ENCODE measurements at regions of chr5 and their contacts with region 1.

Region 1: DNA sequence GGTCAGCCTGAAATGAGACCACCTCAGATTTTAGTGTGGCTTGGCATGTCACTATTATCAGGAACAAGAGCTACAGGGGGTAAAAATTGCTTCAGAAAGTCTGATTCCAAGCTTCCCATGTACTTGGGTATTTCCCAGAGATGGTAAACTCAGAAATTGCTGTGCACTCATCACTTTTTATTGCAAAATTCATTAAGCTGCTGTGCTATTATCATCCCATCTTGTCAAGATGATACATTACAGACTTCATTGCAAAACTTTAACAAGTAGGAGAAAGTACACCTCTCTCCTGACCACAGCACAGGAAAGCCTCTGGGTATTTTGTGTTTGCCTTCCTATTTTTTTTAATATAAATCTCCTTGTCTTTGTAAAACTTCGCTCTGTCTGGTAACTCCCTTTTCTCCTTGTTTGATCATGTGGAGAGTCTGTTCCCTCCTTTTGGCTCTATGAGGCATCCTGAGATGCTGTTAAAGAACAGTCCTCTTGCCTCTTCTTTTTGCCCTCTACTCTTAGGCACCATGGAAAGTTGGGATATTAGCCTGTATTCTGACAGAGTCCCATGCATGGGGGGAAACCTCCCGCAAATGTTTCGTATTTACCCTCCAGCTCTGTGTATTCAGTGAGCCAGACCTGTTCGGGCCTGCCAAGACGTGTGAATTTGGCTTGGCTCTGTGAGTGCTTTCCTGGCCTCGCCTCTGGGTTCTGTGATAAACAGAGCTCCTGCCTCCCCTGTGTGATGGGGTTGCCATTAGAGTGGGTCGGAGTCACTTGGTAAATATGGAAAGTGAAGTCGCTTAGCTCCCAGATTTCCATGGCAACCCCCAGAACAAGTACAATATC is 260.7 kb downstream of the NR3C1 start:
- DNase-seq: peak; percentile 17
- ATAC-seq: no peak
- H3K4me3 ChIP-seq: no peak overlapping the region
- H3K27ac ChIP-seq: no peak overlapping the region
- H3K4me1 ChIP-seq: peaks cover 3% of the 10 kb centered on the region; the same call in 1 of the 2 replicates
- H3K27me3 ChIP-seq: no peaks in the 10 kb centered on the region
- CTCF ChIP-seq: no peak
- POLR2A ChIP-seq: no peak
- RAD21 ChIP-seq: no peak

Region 2: DNA sequence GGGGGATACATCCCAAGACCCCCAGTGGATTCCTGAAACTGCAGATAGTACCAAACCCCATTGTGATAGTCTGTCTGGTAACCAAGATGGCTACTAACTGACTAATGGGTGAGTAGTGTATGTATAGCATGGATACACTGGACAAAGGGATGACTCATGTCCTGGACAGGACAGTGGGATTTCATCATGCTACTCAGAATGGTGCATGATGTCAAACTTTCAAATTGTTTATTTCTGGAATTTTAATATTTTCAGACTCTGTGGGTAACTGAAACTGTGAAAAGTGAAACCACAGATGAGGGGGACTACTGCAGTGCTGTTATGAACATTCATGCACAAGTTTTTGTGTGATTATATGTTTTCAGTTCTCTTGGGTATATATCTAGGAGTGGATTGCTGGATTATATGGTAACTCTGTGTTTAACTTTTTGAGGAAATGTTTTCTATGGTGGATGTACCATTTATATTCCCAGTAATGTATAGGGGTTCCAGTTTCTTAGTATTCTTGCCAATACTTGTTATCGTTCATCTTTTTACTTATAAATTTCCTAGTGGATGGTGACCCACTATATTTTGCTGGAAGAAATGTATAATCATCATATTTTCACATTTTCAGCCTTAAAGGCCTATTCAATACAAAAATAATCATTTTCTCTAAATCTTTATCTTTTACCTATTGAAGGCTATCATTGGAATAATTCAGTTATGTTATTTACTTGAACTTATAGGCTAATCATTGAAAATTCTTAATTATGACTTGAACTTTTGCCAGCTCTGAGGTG is 119.8 kb after region 1 on chr5:
- CTCF ChIA-PET with region 1: no interaction called
- POLR2A ChIA-PET with region 1: no interaction called
- dilution Hi-C with region 1: no loop called
- in situ Hi-C with region 1: no loop called
- intact Hi-C with region 1: loop called (anchors 5 kb)
- DNase-seq: peak; percentile 99
- ATAC-seq: peak; percentile 86
- H3K4me3 ChIP-seq: no peak overlapping the region
- H3K27ac ChIP-seq: no peak overlapping the region
- H3K4me1 ChIP-seq: peaks cover 6% of the 10 kb centered on the region; the same call in 1 of the 2 replicates
- H3K27me3 ChIP-seq: no peaks in the 10 kb centered on the region
- CTCF ChIP-seq: no peak
- POLR2A ChIP-seq: no peak
- RAD21 ChIP-seq: peak; percentile 9; the same call in 1 of the 2 replicates